Activated B cell treated with CpG ODN at 0.5 μM for 24 hours (primary cell): ENCODE measurements at regions of chr6 and their contacts with region 1.

Region 1: GRCh38 chr6:167898673-167899311 is 72.1 kb downstream of the AFDN start:
- DNase-seq: no peak
- ATAC-seq: no peak
- H3K4me3 Mint-ChIP-seq: no peak overlapping the region
- H3K27ac Mint-ChIP-seq: no peak overlapping the region
- H3K4me1 Mint-ChIP-seq: no peaks in the 10 kb centered on the region
- H3K27me3 Mint-ChIP-seq: no peaks in the 10 kb centered on the region
- CTCF ChIP-seq: no peak

Region 2: DNA sequence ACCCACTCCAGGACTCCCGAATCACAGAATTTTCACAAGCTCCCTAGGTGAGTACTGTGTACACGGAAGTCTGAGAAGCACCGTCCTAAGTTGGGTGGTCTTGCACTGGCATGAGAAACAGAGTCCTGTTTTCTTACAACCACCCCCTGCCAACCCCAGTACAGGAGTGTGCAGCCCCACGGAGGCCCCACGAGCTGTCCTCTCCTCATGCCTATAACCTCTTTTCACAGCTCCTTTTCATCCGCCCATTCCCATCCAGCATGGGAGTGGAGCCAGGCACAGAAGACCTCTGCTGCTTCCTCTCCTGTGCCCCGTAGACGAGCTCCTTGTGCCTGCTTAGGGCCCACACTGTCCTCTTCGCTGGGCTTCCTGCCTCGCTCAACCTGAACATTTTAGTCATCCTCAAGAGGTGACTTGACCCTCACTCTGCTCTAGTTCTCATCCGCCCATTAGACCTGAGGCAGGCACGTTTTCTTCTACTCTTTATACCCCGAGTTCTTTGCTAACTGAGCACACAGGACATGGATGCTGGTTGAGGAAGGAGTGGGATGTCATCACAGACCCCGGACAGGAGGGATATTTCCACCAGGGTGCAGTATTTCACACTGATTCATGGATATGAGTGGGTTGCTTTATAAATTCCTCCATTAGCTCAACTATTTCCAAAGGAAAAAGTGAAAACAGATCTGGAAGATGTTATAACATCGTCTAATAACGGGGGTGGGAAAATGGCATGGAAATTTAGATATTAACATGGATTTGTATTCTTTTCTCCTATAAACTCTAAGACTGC is 413.4 kb before region 1 on chr6:
- CTCF ChIA-PET with region 1: interaction called, 10 read pairs
- POLR2A ChIA-PET with region 1: no interaction called
- intact Hi-C with region 1: no loop called
- DNase-seq: no peak
- ATAC-seq: no peak
- H3K4me3 Mint-ChIP-seq: no peak overlapping the region
- H3K27ac Mint-ChIP-seq: no peak overlapping the region
- H3K4me1 Mint-ChIP-seq: no peaks in the 10 kb centered on the region
- H3K27me3 Mint-ChIP-seq: peaks cover 11% of the 10 kb centered on the region
- CTCF ChIP-seq: no peak